MCF 10A (cell line): ENCODE measurements at regions of chrX and their contacts with region 1.

Region 1: DNA sequence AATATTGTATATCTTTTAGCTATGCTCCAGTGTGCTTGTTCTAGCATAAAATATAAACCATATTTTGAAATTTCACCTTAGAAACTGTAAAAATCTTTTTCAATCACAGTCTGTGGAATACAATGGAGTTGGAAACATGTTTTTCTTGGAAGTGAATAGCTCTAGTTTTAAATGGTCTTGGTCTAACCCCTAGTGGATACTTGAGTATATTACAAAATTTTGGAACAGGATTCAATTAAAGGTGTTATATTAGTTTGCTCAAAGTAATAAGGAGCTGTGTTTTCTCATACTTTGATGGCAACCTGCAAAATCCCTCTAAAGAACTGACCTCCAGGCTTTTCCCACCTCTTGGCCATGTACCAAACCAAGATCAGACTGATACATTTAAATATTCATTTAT is 48.2 kb downstream of the STK26 start:
- DNase-seq: peak; percentile 20
- H3K4me3 Mint-ChIP-seq: no peak overlapping the region
- H3K27ac Mint-ChIP-seq: no peak overlapping the region
- H3K4me1 Mint-ChIP-seq: no peaks in the 10 kb centered on the region
- H3K27me3 Mint-ChIP-seq: peaks cover 11% of the 10 kb centered on the region
- CTCF ChIP-seq: peak; percentile 19

Region 2: GRCh38 chrX:131854581-131854980 is 216.7 kb before region 1 on chrX:
- CTCF ChIA-PET with region 1: interaction called, 16 read pairs
- POLR2A ChIA-PET with region 1: interaction called, 3 read pairs
- intact Hi-C with region 1: loop called (anchors 1 kb)
- DNase-seq: peak; percentile 18
- H3K4me3 Mint-ChIP-seq: no peak overlapping the region
- H3K27ac Mint-ChIP-seq: no peak overlapping the region
- H3K4me1 Mint-ChIP-seq: no peaks in the 10 kb centered on the region
- H3K27me3 Mint-ChIP-seq: peaks cover 74% of the 10 kb centered on the region
- CTCF ChIP-seq: peak; percentile 36

Region 3: DNA sequence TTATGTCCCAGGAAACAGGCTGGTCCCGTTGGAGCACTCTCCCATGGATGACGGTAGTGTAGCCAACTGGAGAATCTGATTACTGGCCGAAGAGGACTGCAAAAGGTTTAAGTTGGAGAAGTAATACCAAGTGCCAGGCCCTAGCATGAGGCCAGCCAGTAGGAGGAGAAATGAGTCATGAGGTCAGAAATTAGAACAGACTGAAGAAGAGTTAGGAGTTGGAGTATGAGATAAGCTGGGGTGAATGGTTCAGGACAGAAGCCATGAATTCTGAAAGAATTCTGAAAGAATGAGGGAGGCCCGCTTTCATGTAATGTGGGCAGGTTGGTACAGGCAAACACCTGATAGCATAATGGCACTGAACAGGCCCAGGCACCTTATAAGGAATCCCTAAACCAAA is 66.6 kb before region 1 on chrX:
- CTCF ChIA-PET with region 1: no interaction called
- POLR2A ChIA-PET with region 1: no interaction called
- intact Hi-C with region 1: no loop called
- DNase-seq: peak; percentile 25
- H3K4me3 Mint-ChIP-seq: no peak overlapping the region
- H3K27ac Mint-ChIP-seq: no peak overlapping the region
- H3K4me1 Mint-ChIP-seq: peaks cover 6% of the 10 kb centered on the region
- H3K27me3 Mint-ChIP-seq: peaks cover 74% of the 10 kb centered on the region
- CTCF ChIP-seq: no peak

Region 4: GRCh38 chrX:132059973-132060540 is 11.2 kb before region 1 on chrX:
- CTCF ChIA-PET with region 1: interaction called, 13 read pairs
- POLR2A ChIA-PET with region 1: no interaction called
- intact Hi-C with region 1: no loop called
- DNase-seq: no peak
- H3K4me3 Mint-ChIP-seq: no peak overlapping the region
- H3K27ac Mint-ChIP-seq: no peak overlapping the region
- H3K4me1 Mint-ChIP-seq: no peaks in the 10 kb centered on the region
- H3K27me3 Mint-ChIP-seq: peaks cover 58% of the 10 kb centered on the region
- CTCF ChIP-seq: no peak

Region 5: DNA sequence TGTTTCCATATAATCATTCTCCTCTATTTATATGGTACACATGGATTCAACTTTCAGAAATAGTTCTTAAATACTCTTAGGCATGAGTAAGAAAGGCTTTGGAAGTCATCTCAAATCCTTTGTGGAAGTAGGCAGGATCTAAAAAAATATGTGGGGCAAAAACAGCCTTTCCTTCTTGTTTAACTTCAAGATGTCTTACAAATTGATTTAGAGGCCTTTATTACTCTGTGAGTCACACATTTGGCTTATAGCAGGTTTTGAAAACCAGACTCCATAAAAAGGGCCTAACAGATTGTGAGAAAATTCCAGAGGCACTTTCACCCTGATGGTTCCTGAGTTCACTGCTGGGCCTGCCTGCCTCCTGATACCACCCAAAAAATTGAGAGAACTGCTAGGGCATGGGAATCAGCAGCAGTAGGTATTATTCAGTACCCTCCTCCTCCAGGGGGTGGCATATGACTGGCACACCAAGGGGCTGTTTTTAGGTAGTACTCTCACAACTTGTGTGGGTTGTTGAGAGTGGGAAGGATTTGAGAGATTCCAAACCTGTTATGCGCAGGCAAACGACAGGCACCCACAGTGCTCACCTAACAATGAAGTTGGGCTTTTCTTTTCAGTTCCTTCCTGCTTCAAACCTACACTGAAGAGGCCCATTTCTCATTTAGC is 580.3 kb after region 1 on chrX:
- CTCF ChIA-PET with region 1: no interaction called
- POLR2A ChIA-PET with region 1: no interaction called
- intact Hi-C with region 1: no loop called
- DNase-seq: no peak
- H3K4me3 Mint-ChIP-seq: no peak overlapping the region
- H3K27ac Mint-ChIP-seq: no peak overlapping the region
- H3K4me1 Mint-ChIP-seq: no peaks in the 10 kb centered on the region
- H3K27me3 Mint-ChIP-seq: peaks cover 61% of the 10 kb centered on the region
- CTCF ChIP-seq: peak; percentile 20